ENCODE measurements at regions of chr15 and their contacts with region 1.

Region 1: DNA sequence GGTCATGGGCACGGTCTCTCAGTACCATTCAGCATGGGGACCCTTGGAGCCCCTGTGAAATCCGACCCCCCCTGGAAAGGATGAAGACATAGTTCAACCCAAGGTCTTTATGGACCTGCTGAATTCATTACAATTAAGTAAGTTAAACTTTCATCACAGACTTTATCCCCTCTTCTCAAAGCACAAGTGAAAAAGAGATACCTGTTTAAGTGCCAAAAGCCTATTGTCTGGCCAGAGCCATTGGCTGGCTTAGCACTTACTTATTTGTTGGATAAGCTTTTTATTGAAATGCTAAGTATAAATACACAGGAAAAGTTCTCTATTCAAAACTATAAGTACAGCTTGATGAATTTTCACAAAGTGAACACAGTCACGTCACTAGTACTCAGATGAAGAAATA is 128.4 kb upstream of the NR2E3 start:
- DNase-seq: no peak
- H3K4me3 ChIP-seq: no peak overlapping the region
- H3K27me3 ChIP-seq: no peaks in the 10 kb centered on the region
- CTCF ChIP-seq: no peak

Region 2: GRCh38 chr15:70763120-70763878 is 918.7 kb before region 1 on chr15 and contains the start of gene UACA:
- CTCF ChIA-PET with region 1: no interaction called
- POLR2A ChIA-PET with region 1: interaction called, 15 read pairs
- DNase-seq: peak; percentile 86
- H3K4me3 ChIP-seq: peak within 1 kb of the TSS; percentile 81
- H3K27me3 ChIP-seq: no peaks in the 10 kb centered on the region
- CTCF ChIP-seq: no peak
- polyA plus RNA-seq, gene UACA: 143 and 162 TPM in 2 replicates

Region 3: DNA sequence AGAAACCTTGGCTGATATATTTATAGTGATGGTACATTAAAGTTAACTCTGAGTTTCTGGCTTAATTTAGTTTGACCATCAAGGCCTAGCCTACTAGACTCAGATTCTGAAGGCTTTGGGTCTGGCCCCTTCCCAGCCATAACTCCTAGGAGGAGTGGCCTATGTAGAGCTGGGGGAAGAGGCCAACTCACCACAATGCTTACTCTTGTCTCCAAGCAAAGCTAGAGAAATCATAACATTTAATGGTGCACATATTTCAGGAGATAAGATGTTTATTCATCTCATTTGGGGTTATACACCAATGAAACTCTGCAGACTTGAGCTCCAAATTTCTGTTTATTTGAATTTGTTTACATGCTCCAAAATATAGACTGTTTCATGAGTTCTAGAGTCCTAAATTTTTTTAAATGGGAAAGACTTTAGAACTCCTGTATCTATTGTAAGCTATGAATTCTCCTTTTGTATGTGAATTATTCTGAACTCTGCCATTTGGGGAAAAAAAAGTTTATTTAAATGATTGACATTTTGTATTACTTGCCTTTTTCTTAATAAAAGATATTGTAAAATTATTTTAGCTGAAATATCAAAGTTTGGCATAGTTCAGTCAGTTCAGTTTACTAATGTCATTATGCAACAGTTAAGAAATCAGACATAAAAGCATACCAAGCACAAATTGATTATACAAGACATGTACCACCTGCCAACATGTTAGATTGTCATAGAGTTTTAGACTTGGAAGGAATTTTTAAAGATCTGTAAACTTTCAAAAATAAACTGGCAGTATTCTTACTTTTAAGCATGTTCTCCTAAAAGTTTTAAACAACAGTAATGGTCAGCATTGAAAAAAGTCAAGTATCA is 15.0 kb before region 1 on chr15:
- CTCF ChIA-PET with region 1: no interaction called
- POLR2A ChIA-PET with region 1: no interaction called
- DNase-seq: no peak
- H3K4me3 ChIP-seq: no peak overlapping the region
- H3K27me3 ChIP-seq: no peaks in the 10 kb centered on the region
- CTCF ChIP-seq: no peak